PC-3 (cell line): ENCODE measurements at regions of chr1 and their contacts with region 1.

Region 1: GRCh38 chr1:175033953-175034352 is 10.7 kb upstream of the MRPS14 start:
- DNase-seq: no peak
- ATAC-seq: no peak
- H3K4me3 ChIP-seq: no peak overlapping the region
- H3K27ac ChIP-seq: no peak overlapping the region
- H3K4me1 ChIP-seq: peaks cover 18% of the 10 kb centered on the region
- H3K27me3 ChIP-seq: no peaks in the 10 kb centered on the region
- CTCF ChIP-seq: no peak

Region 2: DNA sequence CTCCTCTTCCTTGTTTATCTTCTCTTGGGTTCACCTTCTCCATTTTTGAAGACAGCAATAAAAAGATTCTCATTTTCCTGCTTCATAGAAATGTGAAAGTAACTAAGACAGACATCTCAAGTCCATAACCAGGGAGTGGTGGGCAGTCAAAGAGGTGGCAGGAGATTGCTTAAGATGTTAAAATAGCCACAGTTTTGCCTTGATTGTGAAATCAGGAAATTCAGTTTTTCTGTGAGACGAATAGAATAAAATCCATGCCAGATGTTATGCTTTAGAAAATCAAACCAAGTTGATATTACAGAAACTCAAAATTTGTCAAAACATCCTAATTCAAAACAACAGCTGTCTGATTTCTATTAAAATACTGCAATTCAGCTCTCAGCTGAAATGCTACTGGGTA is 90.9 kb after region 1 on chr1:
- CTCF ChIA-PET with region 1: interaction called, 37 read pairs
- POLR2A ChIA-PET with region 1: no interaction called
- intact Hi-C with region 1: loop called (anchors 1 kb)
- DNase-seq: no peak
- ATAC-seq: no peak
- H3K4me3 ChIP-seq: no peak overlapping the region
- H3K27ac ChIP-seq: no peak overlapping the region
- H3K4me1 ChIP-seq: no peaks in the 10 kb centered on the region
- H3K27me3 ChIP-seq: no peaks in the 10 kb centered on the region
- CTCF ChIP-seq: no peak

Region 3: DNA sequence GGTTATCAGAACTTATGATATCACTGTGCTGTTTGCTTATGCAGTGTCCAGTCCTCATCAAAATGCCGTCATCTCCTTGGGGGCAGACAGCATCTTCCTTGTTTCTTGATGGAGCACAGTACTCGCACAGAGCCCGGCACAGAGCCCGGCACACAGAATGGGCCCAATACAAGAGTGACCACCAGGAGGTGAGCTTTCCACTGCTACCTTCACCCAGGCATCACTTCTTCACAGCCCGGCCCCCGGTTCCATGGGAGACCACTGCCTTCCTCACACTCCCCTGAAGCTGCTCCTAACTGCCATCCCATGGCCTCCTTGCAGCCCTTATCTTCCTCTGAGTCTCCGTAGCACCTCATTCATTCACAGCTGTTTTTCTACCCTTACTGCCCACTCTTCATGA is 615.5 kb after region 1 on chr1:
- CTCF ChIA-PET with region 1: no interaction called
- POLR2A ChIA-PET with region 1: no interaction called
- intact Hi-C with region 1: no loop called
- DNase-seq: no peak
- ATAC-seq: no peak
- H3K4me3 ChIP-seq: no peak overlapping the region
- H3K27ac ChIP-seq: no peak overlapping the region
- H3K4me1 ChIP-seq: no peaks in the 10 kb centered on the region
- H3K27me3 ChIP-seq: no peaks in the 10 kb centered on the region
- CTCF ChIP-seq: no peak